ENCODE measurements at regions of chr7 and their contacts with region 1.

Region 1: GRCh38 chr7:2209146-2209960 is 23.4 kb downstream of the MAD1L1 start:
- DNase-seq: peak in 1 of 2 donors; percentile 72
- H3K4me3 ChIP-seq: no peak overlapping the region
- H3K27ac ChIP-seq: no peak overlapping the region
- H3K4me1 ChIP-seq: peaks cover 0 to 4% of the 10 kb centered on the region in 2 donors
- H3K27me3 ChIP-seq: no peaks in the 10 kb centered on the region
- CTCF ChIP-seq: peak; percentile 49 to 67 (median 62)

Region 2: DNA sequence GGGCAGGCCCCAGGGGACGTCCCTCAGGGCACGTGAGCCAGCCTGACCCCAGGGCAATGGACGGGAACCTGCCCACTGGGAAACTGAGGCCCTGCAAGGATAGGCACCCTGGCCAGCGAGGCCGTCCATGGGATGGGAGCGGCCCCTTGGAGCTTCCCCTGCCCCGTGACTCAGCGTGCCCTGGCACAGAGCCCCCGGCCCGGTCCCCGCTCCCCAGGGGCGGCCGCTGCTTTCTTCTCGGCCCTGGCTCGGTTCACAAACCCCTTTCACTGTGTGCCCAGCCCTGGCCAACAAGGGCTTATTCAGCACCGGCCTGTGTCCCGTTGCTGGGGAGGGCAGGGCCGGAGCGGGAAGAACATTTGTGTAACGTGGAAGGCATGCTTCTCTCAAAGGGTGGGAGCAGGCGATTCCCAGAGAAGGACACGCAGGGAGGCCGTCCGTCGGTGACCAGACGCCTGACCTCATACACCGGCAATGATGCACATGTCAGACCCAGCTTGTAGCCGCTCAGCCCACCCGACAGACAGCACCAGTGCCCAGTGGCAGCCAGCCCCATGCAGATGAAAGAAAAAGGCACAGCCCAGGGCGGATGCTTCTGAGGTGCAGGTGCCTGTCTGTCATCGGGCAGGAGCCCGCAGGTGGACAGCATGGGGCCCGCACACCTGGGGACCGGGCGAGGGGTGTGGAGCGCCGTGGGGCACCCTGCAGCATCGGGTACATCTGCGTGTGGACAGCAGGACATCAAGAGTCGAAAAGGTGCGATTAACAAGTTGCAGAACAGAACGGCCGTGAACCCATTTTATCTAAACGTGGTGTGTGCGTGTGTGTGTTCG is 1784.2 kb before region 1 on chr7:
- intact Hi-C with region 1: no loop called
- DNase-seq: peak; percentile 47 to 82
- H3K4me3 ChIP-seq: peak overlapping the region in 1 of 2 donors; percentile 20
- H3K27ac ChIP-seq: no peak overlapping the region
- H3K4me1 ChIP-seq: peaks cover 8 to 18% of the 10 kb centered on the region in 2 donors
- H3K27me3 ChIP-seq: no peaks in the 10 kb centered on the region
- CTCF ChIP-seq: no peak

Region 3: DNA sequence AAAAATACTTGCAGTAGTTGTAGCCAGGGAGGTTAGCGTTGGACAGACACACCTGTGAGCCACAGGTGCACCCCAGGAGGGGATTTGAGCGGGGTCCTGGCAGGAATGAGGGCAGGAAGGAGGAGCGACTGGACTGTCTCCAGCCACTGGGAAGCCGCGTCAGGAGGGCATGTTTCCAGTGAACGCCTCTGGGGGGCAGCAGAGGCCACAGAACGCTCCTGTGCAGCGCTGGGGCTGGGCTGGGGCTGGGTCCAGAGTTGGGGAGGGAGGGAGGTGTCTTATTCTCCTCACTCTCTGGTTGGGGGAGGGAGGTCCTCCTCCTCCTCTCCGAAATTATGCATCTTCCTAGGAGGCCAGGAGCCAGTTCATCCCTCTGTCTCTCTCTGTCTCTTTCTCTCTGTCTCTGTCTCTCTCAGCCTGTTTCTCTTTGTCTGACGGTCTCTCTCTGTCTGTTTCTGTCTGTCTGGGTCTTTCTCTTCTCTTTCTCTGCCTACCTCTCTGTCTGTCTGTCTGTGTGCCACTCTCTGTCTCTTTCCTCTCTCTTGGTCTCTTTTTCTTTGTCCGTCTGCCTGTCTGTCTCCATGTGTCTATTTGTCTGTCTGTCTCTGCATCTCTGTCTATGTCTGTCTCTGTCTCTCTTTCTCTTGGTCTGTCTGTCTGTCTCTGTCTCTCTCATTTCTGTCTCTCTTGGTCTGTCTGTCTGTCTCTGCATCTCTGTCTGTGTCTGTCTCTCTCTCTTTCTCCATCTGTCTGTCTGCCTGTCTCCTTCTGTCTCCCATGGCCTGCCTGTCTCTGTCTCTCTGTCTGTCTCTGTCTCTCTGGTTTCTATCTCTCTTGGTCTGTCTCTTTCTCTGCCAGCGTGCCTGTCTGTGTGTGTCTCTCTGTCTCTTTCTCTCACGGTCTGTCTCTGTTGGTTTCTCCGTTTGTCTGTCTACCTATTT is 629.6 kb before region 1 on chr7:
- intact Hi-C with region 1: loop called (anchors 5 kb)
- DNase-seq: peak in 1 of 2 donors; percentile 75
- H3K4me3 ChIP-seq: no peak overlapping the region
- H3K27ac ChIP-seq: no peak overlapping the region
- H3K4me1 ChIP-seq: peaks cover 0 to 7% of the 10 kb centered on the region in 2 donors
- H3K27me3 ChIP-seq: no peaks in the 10 kb centered on the region
- CTCF ChIP-seq: peak; percentile 60 to 88 (median 88)

Region 4: GRCh38 chr7:1664711-1665548 is 544.4 kb before region 1 on chr7:
- intact Hi-C with region 1: loop called (anchors 2 kb)
- DNase-seq: peak in 1 of 2 donors; percentile 68
- H3K4me3 ChIP-seq: peak overlapping the region; percentile 60 to 62
- H3K27ac ChIP-seq: no peak overlapping the region
- H3K4me1 ChIP-seq: peaks cover 18 to 26% of the 10 kb centered on the region in 2 donors
- H3K27me3 ChIP-seq: peaks cover 32% of the 10 kb centered on the region
- CTCF ChIP-seq: peak; percentile 58 to 80 (median 65)

Region 5: GRCh38 chr7:2104107-2104710 is 105.1 kb before region 1 on chr7:
- intact Hi-C with region 1: loop called (anchors 2 kb)
- DNase-seq: peak; percentile 26 to 87
- H3K4me3 ChIP-seq: no peak overlapping the region
- H3K27ac ChIP-seq: no peak overlapping the region
- H3K4me1 ChIP-seq: peaks cover 0 to 2% of the 10 kb centered on the region in 2 donors
- H3K27me3 ChIP-seq: no peaks in the 10 kb centered on the region
- CTCF ChIP-seq: peak; percentile 52 to 57 (median 55)

Measured in ascending aorta (tissue), 2 donors.